ENCODE measurements at regions of chr1 and their contacts with region 1.

Region 1: DNA sequence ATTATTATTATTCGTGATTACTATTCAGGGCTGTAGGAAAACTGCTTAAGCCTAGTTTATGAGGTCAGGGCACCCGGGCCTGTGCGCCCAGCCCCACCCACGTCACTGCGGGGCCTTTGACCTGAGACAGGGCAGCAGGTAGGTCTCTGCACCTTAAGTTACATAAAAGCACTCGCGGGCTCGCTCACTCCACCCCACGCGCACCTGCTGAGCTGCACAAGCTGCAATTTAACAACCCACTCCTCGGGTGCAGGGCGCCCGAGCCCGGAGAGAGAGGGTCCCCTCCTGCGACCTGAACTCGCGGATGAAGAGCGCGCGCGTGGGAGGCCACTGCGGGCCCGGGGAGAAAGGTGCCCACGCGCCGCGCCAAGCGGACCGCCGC is 477 bp downstream of the ICMT start:
- DNase-seq: peak in 2 of 4 experiments; percentile 46 to 51
- ATAC-seq: peak; percentile 19
- H3K4me3 ChIP-seq: peak overlapping the region; percentile 95
- H3K27ac ChIP-seq: peak overlapping the region; percentile 85
- H3K4me1 ChIP-seq: peaks cover 10 to 28% of the 10 kb centered on the region in 2 experiments; a peak in 4 of 5 replicates
- H3K27me3 ChIP-seq: peaks cover 1 to 7% of the 10 kb centered on the region in 2 experiments; a peak in 3 of 5 replicates
- CTCF ChIP-seq: no peak
- EP300 ChIP-seq: no peak
- POLR2A ChIP-seq: no peak
- RAD21 ChIP-seq: no peak

Region 2: DNA sequence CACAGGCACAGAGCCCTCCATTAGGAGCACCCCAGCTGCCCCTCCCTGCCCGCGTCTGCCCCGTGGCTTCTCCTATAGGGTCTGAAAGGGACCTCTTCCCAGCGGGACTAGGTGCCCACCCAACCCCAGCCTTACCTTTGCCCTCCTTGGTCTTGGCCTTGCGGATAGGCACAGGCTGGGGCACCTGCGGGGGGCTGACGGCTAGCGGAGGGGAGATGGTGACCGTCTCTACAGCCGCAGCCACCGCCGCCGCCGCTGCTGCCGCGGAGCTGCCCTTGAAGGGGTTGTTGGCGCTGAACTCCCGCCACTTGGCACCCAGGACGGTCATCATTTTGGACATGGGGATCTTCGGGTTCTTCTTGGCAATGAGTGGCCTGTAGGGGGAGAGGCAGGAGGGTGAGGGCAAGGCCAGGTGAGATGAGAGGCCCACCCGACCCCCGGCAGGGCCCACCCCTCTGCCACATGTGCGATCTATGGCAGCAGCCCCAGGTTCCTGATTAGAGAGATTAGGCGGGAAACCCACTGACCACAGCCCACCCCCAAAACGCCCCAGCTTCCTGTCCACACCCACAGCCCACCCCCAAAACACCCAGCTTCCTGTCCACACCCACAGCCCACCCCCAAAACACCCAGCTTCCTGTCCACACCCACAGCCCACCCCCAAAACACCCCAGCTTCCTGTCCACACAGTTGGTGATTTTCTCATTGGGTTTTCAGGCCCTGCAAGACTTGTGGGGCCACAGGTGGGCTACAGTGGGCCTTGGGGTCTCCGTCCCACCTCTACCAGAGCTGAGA is 80.6 kb before region 1 on chr1:
- CTCF ChIA-PET with region 1: no interaction called
- POLR2A ChIA-PET with region 1: no interaction called
- in situ Hi-C with region 1: no loop called
- intact Hi-C with region 1: no loop called
- DNase-seq: no peak
- ATAC-seq: no peak
- H3K4me3 ChIP-seq: no peak overlapping the region
- H3K27ac ChIP-seq: no peak overlapping the region
- H3K4me1 ChIP-seq: peaks cover 0 to 14% of the 10 kb centered on the region in 2 experiments; a peak in 2 of 5 replicates
- H3K27me3 ChIP-seq: peaks cover 32 to 84% of the 10 kb centered on the region in 2 experiments; a peak in 4 of 5 replicates
- CTCF ChIP-seq: no peak
- EP300 ChIP-seq: no peak
- POLR2A ChIP-seq: no peak
- RAD21 ChIP-seq: no peak

Region 3: GRCh38 chr1:6199298-6200187 is 35.7 kb before region 1 on chr1 and contains the start of gene RPL22:
- CTCF ChIA-PET with region 1: no interaction called
- POLR2A ChIA-PET with region 1: interaction called, 10 read pairs
- in situ Hi-C with region 1: no loop called
- intact Hi-C with region 1: loop called (anchors 2 kb)
- DNase-seq: peak; percentile 89 to 100 (median 93)
- ATAC-seq: peak; percentile 98
- H3K4me3 ChIP-seq: peak within 1 kb of the TSS; percentile 99
- H3K27ac ChIP-seq: peak within 1 kb of the TSS; percentile 96
- H3K4me1 ChIP-seq: peaks cover 18 to 22% of the 10 kb centered on the region in 2 experiments; a peak in 4 of 5 replicates
- H3K27me3 ChIP-seq: no peaks in the 10 kb centered on the region
- CTCF ChIP-seq: peak in 1 of 3 experiments; percentile 5; a peak in 1 of 6 replicates
- EP300 ChIP-seq: peak; percentile 58
- POLR2A ChIP-seq: peak; percentile 98
- RAD21 ChIP-seq: no peak
- polyA plus RNA-seq, gene RPL22: 581 to 618 TPM

Region 4: DNA sequence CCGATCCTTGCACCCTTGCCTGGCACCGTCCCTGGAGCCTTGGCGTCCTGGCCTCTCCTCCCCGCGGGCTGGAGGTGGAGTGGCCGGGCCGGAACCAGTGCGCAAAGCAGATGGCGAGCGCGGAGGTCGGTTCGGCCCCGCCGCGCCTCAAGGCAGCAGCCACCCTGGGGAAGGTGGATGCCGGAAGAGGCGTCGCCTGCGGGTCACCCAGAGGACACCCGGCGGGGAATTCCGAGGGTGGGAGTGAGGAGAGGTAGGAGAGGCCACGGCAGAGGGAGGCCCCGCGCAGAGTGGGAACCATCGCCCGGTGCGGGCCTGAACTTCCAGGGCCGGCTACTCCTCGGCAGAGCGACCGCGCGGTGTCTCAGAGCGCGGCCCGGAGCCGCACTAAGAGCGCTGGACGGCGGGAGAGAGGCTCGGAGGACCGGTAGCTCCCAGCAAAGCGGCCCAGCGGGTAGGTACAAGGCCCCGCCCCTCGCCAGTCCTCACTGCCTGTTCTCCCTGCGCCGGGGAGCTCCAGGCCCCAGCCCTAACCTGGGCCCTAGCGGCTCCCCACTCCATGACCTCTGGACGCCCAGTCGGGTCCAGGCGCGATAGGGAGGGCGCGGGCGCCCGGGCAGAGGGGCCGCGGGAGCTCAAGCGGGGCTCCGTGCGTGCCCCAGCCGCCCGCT is 29.3 kb before region 1 on chr1 and contains the start of gene RNF207:
- CTCF ChIA-PET with region 1: no interaction called
- POLR2A ChIA-PET with region 1: interaction called, 10 read pairs
- in situ Hi-C with region 1: no loop called
- intact Hi-C with region 1: no loop called
- DNase-seq: peak; percentile 83 to 85 (median 84)
- ATAC-seq: peak; percentile 68
- H3K4me3 ChIP-seq: peak within 1 kb of the TSS; percentile 62
- H3K27ac ChIP-seq: peak within 1 kb of the TSS; percentile 87
- H3K4me1 ChIP-seq: peaks cover 14 to 77% of the 10 kb centered on the region in 2 experiments; a peak in 4 of 5 replicates
- H3K27me3 ChIP-seq: no peaks in the 10 kb centered on the region
- CTCF ChIP-seq: no peak
- EP300 ChIP-seq: no peak
- POLR2A ChIP-seq: peak; percentile 81
- RAD21 ChIP-seq: no peak
- polyA plus RNA-seq, gene RNF207: 2.7 to 4.3 TPM

Region 5: DNA sequence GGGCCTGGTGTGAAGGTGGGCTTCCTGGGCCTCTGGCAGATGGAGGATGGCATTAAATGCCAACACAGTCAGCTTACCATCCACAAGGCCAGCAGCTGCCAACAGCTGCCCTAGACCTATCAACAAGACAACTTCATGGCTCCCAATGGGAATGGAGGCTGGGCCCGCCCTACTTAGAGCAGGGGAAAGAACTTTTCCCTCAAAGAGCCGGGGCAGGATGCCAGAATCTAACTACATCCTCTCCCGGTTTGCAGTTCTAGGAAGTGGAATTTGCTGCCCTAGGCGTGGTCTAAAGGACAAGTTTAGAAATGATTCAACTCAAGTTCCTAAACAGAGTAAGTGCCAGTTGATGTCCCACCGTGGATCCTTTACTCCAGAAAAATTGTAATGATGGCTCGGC is 12.7 kb before region 1 on chr1:
- CTCF ChIA-PET with region 1: no interaction called
- POLR2A ChIA-PET with region 1: interaction called, 14 read pairs
- in situ Hi-C with region 1: no loop called
- intact Hi-C with region 1: no loop called
- DNase-seq: no peak
- ATAC-seq: no peak
- H3K4me3 ChIP-seq: no peak overlapping the region
- H3K27ac ChIP-seq: no peak overlapping the region
- H3K4me1 ChIP-seq: peaks cover 0 to 6% of the 10 kb centered on the region in 2 experiments; a peak in 2 of 5 replicates
- H3K27me3 ChIP-seq: no peaks in the 10 kb centered on the region
- CTCF ChIP-seq: no peak
- EP300 ChIP-seq: no peak
- POLR2A ChIP-seq: peak; percentile 55; the same call in 1 of the 2 replicates
- RAD21 ChIP-seq: no peak

Region 6: GRCh38 chr1:6300342-6301048 is 65.2 kb after region 1 on chr1:
- CTCF ChIA-PET with region 1: no interaction called
- POLR2A ChIA-PET with region 1: no interaction called
- in situ Hi-C with region 1: no loop called
- intact Hi-C with region 1: no loop called
- DNase-seq: no peak
- ATAC-seq: peak; percentile 35; the same call in 2 of the 3 replicates
- H3K4me3 ChIP-seq: no peak overlapping the region
- H3K27ac ChIP-seq: no peak overlapping the region
- H3K4me1 ChIP-seq: peaks cover 0 to 10% of the 10 kb centered on the region in 2 experiments; a peak in 2 of 5 replicates
- H3K27me3 ChIP-seq: no peaks in the 10 kb centered on the region
- CTCF ChIP-seq: no peak; a peak in 1 of 6 replicates
- EP300 ChIP-seq: no peak
- POLR2A ChIP-seq: no peak
- RAD21 ChIP-seq: no peak